Naive thymus-derived CD4-positive, alpha-beta T cell (primary cell): ENCODE measurements at regions of chr14 and their contacts with region 1.

Region 1: GRCh38 chr14:101854366-101854765 is 92.9 kb downstream of the PPP2R5C start:
- DNase-seq: peak in 6 of 9 donors; percentile 32 to 47 (median 42)
- ATAC-seq: peak; percentile 73
- H3K4me3 ChIP-seq: peak overlapping the region; percentile 22
- H3K4me3 Mint-ChIP-seq: peak overlapping the region; percentile 46 to 85 (median 72)
- H3K27ac ChIP-seq: peak overlapping the region; percentile 36
- H3K27ac Mint-ChIP-seq: peak overlapping the region; percentile 69 to 88 (median 84)
- H3K4me1 ChIP-seq: peaks cover 51 to 71% of the 10 kb centered on the region in 2 donors
- H3K4me1 Mint-ChIP-seq: peaks cover 65 to 96% (median 92%) of the 10 kb centered on the region in 7 donors
- H3K27me3 ChIP-seq: no peaks in the 10 kb centered on the region
- H3K27me3 Mint-ChIP-seq: no peaks in the 10 kb centered on the region

Region 2: DNA sequence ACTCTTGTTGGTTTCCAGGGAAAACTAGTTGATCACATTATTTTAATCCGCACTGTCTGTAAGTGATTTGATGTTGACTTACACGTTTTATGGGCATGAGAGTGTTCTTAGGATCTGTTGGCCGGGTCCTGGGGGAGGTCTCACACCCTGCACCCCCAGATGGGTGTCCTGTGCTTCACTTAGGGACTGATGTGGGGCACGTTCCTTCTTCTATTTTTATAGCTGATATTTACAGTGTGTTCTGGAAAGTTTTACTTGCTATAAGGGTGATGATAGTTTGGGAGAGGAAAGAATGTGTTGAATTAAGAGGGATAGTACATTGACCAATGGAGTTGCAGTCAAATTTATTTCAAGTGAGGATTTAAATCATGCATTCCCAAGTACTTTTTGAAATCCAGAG is 13.5 kb after region 1 on chr14:
- CTCF ChIA-PET with region 1: no interaction called
- POLR2A ChIA-PET with region 1: no interaction called
- intact Hi-C with region 1: loop called in 1 of 2 experiments (anchors 2 kb)
- DNase-seq: no peak
- ATAC-seq: no peak
- H3K4me3 ChIP-seq: no peak overlapping the region
- H3K4me3 Mint-ChIP-seq: peak overlapping the region in 4 of 10 donors; percentile 16 to 36 (median 20)
- H3K27ac ChIP-seq: no peak overlapping the region
- H3K27ac Mint-ChIP-seq: peak overlapping the region in 7 of 9 donors; percentile 17 to 90 (median 57)
- H3K4me1 ChIP-seq: peaks cover 4 to 8% of the 10 kb centered on the region in 2 donors
- H3K4me1 Mint-ChIP-seq: peaks cover 37 to 78% (median 72%) of the 10 kb centered on the region in 7 donors
- H3K27me3 ChIP-seq: no peaks in the 10 kb centered on the region
- H3K27me3 Mint-ChIP-seq: no peaks in the 10 kb centered on the region

Region 3: GRCh38 chr14:101889898-101890297 is 35.5 kb after region 1 on chr14:
- CTCF ChIA-PET with region 1: no interaction called
- POLR2A ChIA-PET with region 1: no interaction called
- intact Hi-C with region 1: loop called in 1 of 2 experiments (anchors 5 kb)
- DNase-seq: peak in 3 of 9 donors; percentile 12 to 26 (median 16)
- ATAC-seq: no peak
- H3K4me3 ChIP-seq: no peak overlapping the region
- H3K4me3 Mint-ChIP-seq: no peak overlapping the region
- H3K27ac ChIP-seq: no peak overlapping the region
- H3K27ac Mint-ChIP-seq: peak overlapping the region in 7 of 9 donors; percentile 7 to 68 (median 54)
- H3K4me1 ChIP-seq: no peaks in the 10 kb centered on the region
- H3K4me1 Mint-ChIP-seq: peaks cover 0 to 5% (median 0%) of the 10 kb centered on the region in 7 donors
- H3K27me3 ChIP-seq: no peaks in the 10 kb centered on the region
- H3K27me3 Mint-ChIP-seq: no peaks in the 10 kb centered on the region